ENCODE measurements at regions of chr6 and their contacts with region 1.

Region 1: GRCh38 chr6:158213925-158214674 is 46.0 kb downstream of the GTF2H5 start:
- DNase-seq: peak; percentile 23
- ATAC-seq: peak; percentile 100
- H3K4me3 ChIP-seq: no peak overlapping the region
- H3K27ac ChIP-seq: no peak overlapping the region
- H3K4me1 ChIP-seq: no peaks in the 10 kb centered on the region
- H3K27me3 ChIP-seq: no peaks in the 10 kb centered on the region
- CTCF ChIP-seq: peak; percentile 78 to 91 (median 81); a peak in 5 of 6 replicates
- EP300 ChIP-seq: no peak
- POLR2A ChIP-seq: no peak
- RAD21 ChIP-seq: peak; percentile 88

Region 2: GRCh38 chr6:158118886-158119285 is 95.2 kb before region 1 on chr6:
- CTCF ChIA-PET with region 1: no interaction called
- POLR2A ChIA-PET with region 1: no interaction called
- RAD21 ChIA-PET with region 1: no interaction called
- SMC1A ChIA-PET with region 1: no interaction called
- in situ Hi-C with region 1: no loop called
- intact Hi-C with region 1: no loop called
- DNase-seq: no peak
- ATAC-seq: no peak
- H3K4me3 ChIP-seq: no peak overlapping the region
- H3K27ac ChIP-seq: no peak overlapping the region
- H3K4me1 ChIP-seq: no peaks in the 10 kb centered on the region
- H3K27me3 ChIP-seq: no peaks in the 10 kb centered on the region
- CTCF ChIP-seq: no peak
- EP300 ChIP-seq: no peak
- POLR2A ChIP-seq: no peak
- RAD21 ChIP-seq: no peak

Region 3: GRCh38 chr6:158518191-158519127 is 304.4 kb after region 1 on chr6:
- CTCF ChIA-PET with region 1: interaction called, 41 read pairs
- POLR2A ChIA-PET with region 1: no interaction called
- RAD21 ChIA-PET with region 1: interaction called, 11 read pairs
- SMC1A ChIA-PET with region 1: interaction called, 25 read pairs
- in situ Hi-C with region 1: no loop called
- intact Hi-C with region 1: no loop called
- DNase-seq: peak; percentile 71
- ATAC-seq: peak; percentile 89
- H3K4me3 ChIP-seq: peak overlapping the region; percentile 54; the same call in 1 of the 2 replicates
- H3K27ac ChIP-seq: peak overlapping the region; percentile 10
- H3K4me1 ChIP-seq: peaks cover 13% of the 10 kb centered on the region
- H3K27me3 ChIP-seq: no peaks in the 10 kb centered on the region
- CTCF ChIP-seq: peak; percentile 64 to 69 (median 69)
- EP300 ChIP-seq: 0 out of 4 replicates have a peak, but pooled peaks of 1 of the 2 experiments have one; percentile 13
- POLR2A ChIP-seq: no peak
- RAD21 ChIP-seq: peak; percentile 83

Region 4: DNA sequence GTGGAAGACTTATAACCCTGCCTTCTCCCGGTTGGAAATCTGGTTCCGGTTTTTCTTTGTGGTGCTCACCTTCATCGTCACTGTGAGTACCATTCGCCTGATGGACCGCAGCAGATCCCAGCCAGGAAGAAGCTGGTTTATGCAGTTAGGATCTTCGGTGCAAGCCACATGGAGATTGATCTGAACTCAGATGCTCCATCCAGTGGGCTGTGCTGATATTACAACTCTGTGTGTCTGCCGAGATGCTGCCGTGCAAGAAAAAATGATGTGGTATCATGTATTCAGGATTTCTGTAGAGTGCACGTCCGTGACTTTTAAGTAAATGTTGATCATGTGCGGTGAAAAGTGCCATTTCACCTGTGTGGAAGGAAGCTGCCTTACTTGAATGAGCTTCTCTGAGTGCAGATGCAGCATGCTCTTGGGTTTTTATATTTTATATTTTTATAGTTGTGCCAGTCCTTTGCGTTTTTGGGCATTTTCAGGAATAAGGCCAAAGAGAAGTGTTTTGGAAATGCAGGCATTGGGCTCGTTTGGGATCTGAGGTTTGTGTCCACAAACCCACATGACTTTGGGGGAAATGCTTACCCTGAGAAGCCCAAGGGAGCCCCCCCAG is 391.3 kb after region 1 on chr6:
- CTCF ChIA-PET with region 1: interaction called, 88 read pairs
- POLR2A ChIA-PET with region 1: interaction called, 4 read pairs
- RAD21 ChIA-PET with region 1: interaction called, 21 read pairs
- SMC1A ChIA-PET with region 1: interaction called, 36 read pairs
- in situ Hi-C with region 1: no loop called
- intact Hi-C with region 1: no loop called
- DNase-seq: peak; percentile 36
- ATAC-seq: peak; percentile 90
- H3K4me3 ChIP-seq: no peak overlapping the region
- H3K27ac ChIP-seq: no peak overlapping the region
- H3K4me1 ChIP-seq: no peaks in the 10 kb centered on the region
- H3K27me3 ChIP-seq: no peaks in the 10 kb centered on the region
- CTCF ChIP-seq: peak; percentile 68 to 84 (median 74); a peak in 5 of 6 replicates
- EP300 ChIP-seq: no peak
- POLR2A ChIP-seq: no peak
- RAD21 ChIP-seq: peak; percentile 72

Region 5: DNA sequence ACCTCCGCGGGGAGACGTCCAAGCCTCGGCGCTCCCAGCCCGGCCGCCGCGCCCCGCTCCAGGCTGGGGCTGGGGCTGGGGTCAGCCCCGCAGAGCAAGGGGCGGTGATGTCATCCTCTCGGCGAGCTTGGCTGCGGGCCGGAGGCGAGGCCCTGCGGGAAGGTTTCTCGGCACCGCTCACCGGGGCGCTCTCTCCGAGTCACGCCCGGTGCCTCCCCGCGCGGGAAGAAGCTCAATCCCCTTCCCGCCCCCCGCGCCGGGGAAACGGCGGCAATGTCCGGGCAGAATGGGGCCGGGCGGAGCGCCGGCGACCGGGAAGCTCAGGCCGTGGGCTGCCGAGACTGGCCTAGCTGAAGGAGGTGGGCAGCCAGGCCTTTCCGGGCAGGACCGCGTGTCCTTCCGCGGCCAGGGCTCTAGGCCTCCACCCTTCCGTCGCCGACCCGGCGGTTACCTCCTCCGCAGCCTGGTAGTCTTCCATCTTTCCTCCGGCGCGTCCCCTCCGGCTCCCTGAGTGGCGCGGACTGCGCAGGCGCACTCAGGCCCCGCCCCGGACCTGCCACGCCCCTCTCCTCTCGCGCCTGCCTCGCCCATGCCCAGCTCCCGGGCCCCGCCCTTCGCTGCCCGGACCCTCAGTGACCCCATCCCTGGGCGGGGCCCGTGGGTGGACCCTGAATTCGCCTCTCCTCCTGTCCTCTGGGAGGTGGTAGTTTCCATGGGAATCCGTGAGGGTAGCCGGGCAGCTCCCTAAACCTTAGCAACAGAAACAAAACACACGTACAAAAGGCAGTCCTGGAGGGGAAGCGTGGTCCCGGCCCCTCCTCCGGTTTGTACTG is 430.3 kb after region 1 on chr6 and contains the start of gene DYNLT1:
- CTCF ChIA-PET with region 1: interaction called, 12 read pairs
- POLR2A ChIA-PET with region 1: interaction called, 4 read pairs
- RAD21 ChIA-PET with region 1: interaction called, 5 read pairs
- SMC1A ChIA-PET with region 1: interaction called, 5 read pairs
- in situ Hi-C with region 1: no loop called
- intact Hi-C with region 1: no loop called
- DNase-seq: peak; percentile 71
- ATAC-seq: peak; percentile 71
- H3K4me3 ChIP-seq: peak within 1 kb of the TSS; percentile 81
- H3K27ac ChIP-seq: peak within 1 kb of the TSS; percentile 82
- H3K4me1 ChIP-seq: peaks cover 26% of the 10 kb centered on the region
- H3K27me3 ChIP-seq: no peaks in the 10 kb centered on the region
- CTCF ChIP-seq: no peak
- EP300 ChIP-seq: no peak
- POLR2A ChIP-seq: peak; percentile 97
- RAD21 ChIP-seq: no peak
- polyA plus RNA-seq, gene DYNLT1: 246 to 298 TPM

Measured in GM12878 (cell line).